SK-N-SH (cell line): ENCODE measurements at regions of chr3 and their contacts with region 1.

Region 1: GRCh38 chr3:185270262-185270955 is 16.6 kb upstream of the EHHADH start:
- DNase-seq: peak; percentile 82
- H3K4me3 ChIP-seq: no peak overlapping the region
- H3K27ac ChIP-seq: peak overlapping the region in 1 of 2 experiments; percentile 48; a peak in 2 of 4 replicates
- H3K4me1 ChIP-seq: peaks cover 0 to 15% of the 10 kb centered on the region in 2 experiments; a peak in 1 of 4 replicates
- H3K27me3 ChIP-seq: no peaks in the 10 kb centered on the region; the same call in 1 of the 2 replicates
- CTCF ChIP-seq: peak; percentile 53
- EP300 ChIP-seq: no peak
- RAD21 ChIP-seq: peak; percentile 76

Region 2: GRCh38 chr3:185280572-185281365 is 10.4 kb after region 1 on chr3:
- CTCF ChIA-PET with region 1: interaction called, 32 read pairs
- POLR2A ChIA-PET with region 1: interaction called, 7 read pairs
- DNase-seq: peak; percentile 54
- H3K4me3 ChIP-seq: no peak overlapping the region; a peak in 1 of 4 replicates
- H3K27ac ChIP-seq: peak overlapping the region in 1 of 2 experiments; percentile 89; a peak in 2 of 4 replicates
- H3K4me1 ChIP-seq: peaks cover 0 to 17% of the 10 kb centered on the region in 2 experiments; a peak in 3 of 4 replicates
- H3K27me3 ChIP-seq: no peaks in the 10 kb centered on the region
- CTCF ChIP-seq: peak; percentile 79
- EP300 ChIP-seq: no peak
- RAD21 ChIP-seq: peak; percentile 57

Region 3: DNA sequence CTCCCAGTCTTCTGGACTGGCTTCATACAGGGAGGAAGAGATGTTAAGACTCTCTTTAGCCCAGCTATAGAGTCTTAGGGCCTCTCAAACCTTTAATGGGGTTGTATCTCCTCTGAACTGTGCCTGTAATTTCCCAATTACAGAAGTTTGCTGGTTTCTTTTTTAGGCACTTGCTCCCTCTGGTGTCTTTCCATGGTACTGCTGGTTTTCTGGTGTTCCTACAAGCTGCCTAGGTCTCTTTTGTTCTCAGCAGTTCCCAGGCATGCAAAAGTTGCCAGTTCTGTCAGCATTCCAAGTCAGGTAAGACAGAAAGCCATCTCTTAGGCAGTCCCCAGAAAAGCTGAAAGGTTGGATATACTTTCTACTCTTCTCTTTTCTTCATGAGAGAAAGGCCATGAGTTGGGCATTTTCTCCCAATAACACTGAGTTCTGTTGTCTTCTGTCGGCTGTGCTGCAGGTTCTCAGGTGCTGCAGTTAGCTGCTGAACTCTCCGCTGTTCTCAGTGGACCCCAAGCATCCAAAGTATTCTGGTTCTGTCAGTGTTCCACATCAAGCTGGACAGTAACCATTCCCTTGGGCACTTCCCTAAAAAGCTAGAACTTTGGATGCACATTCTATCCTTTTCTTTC is 37.8 kb after region 1 on chr3:
- CTCF ChIA-PET with region 1: interaction called, 14 read pairs
- POLR2A ChIA-PET with region 1: no interaction called
- DNase-seq: peak; percentile 44
- H3K4me3 ChIP-seq: no peak overlapping the region; a peak in 1 of 4 replicates
- H3K27ac ChIP-seq: no peak overlapping the region
- H3K4me1 ChIP-seq: no peaks in the 10 kb centered on the region
- H3K27me3 ChIP-seq: no peaks in the 10 kb centered on the region
- CTCF ChIP-seq: peak; percentile 62
- EP300 ChIP-seq: no peak
- RAD21 ChIP-seq: peak; percentile 68